ENCODE measurements at regions of chr2 and their contacts with region 1.

Region 1: GRCh38 chr2:29196792-29197788 is 81.9 kb downstream of the CLIP4 start:
- DNase-seq: peak; percentile 38

Region 2: GRCh38 chr2:28958689-28959088 is 238.4 kb before region 1 on chr2:
- in situ Hi-C with region 1: loop called (anchors 10 kb)
- DNase-seq: peak; percentile 78

Region 3: GRCh38 chr2:28972778-28973340 is 224.2 kb before region 1 on chr2:
- in situ Hi-C with region 1: no loop called
- DNase-seq: no peak

Measured in Caki2 (cell line).